K562 (cell line): ENCODE measurements at regions of chr1 and their contacts with region 1.

Region 1: DNA sequence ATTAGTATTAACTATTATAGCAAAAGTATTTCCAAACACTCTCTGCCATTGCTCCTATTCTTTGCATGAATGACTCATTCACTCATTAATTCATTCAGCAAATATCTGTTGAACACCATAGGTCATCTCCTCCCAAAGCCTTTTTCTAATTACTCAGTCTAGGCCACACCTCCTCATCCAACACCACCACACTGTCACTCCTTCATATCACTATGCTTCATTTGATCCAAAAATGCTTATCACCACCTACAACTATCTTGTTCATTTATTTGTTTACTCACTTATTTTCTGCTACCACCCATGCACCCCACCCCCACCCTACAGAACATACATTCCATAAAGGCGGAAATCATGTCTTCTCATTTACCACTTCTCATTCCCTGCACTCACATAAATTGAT is 94.4 kb upstream of the TNFSF4 start:
- DNase-seq: peak; percentile 25 to 59 (median 30)
- ATAC-seq: peak; percentile 61
- H3K4me3 ChIP-seq: no peak overlapping the region
- H3K27ac ChIP-seq: no peak overlapping the region
- H3K4me1 ChIP-seq: peaks cover 5 to 39% of the 10 kb centered on the region in 2 experiments
- H3K27me3 ChIP-seq: no peaks in the 10 kb centered on the region
- CTCF ChIP-seq: no peak
- EP300 ChIP-seq: no peak
- POLR2A ChIP-seq: no peak
- RAD21 ChIP-seq: no peak

Region 2: GRCh38 chr1:173330149-173330951 is 28.8 kb after region 1 on chr1:
- CTCF ChIA-PET with region 1: no interaction called
- POLR2A ChIA-PET with region 1: no interaction called
- in situ Hi-C with region 1: no loop called
- intact Hi-C with region 1: loop called (anchors 1 kb)
- DNase-seq: peak; percentile 21 to 84 (median 47)
- ATAC-seq: peak; percentile 91
- H3K4me3 ChIP-seq: no peak overlapping the region
- H3K27ac ChIP-seq: peak overlapping the region; percentile 75; the same call in 2 of the 3 replicates
- H3K4me1 ChIP-seq: peaks cover 0 to 32% of the 10 kb centered on the region in 2 experiments; a peak in 4 of 5 replicates
- H3K27me3 ChIP-seq: no peaks in the 10 kb centered on the region
- CTCF ChIP-seq: no peak
- EP300 ChIP-seq: peak; percentile 87
- POLR2A ChIP-seq: no peak
- RAD21 ChIP-seq: no peak; a peak in 1 of 4 replicates

Region 3: DNA sequence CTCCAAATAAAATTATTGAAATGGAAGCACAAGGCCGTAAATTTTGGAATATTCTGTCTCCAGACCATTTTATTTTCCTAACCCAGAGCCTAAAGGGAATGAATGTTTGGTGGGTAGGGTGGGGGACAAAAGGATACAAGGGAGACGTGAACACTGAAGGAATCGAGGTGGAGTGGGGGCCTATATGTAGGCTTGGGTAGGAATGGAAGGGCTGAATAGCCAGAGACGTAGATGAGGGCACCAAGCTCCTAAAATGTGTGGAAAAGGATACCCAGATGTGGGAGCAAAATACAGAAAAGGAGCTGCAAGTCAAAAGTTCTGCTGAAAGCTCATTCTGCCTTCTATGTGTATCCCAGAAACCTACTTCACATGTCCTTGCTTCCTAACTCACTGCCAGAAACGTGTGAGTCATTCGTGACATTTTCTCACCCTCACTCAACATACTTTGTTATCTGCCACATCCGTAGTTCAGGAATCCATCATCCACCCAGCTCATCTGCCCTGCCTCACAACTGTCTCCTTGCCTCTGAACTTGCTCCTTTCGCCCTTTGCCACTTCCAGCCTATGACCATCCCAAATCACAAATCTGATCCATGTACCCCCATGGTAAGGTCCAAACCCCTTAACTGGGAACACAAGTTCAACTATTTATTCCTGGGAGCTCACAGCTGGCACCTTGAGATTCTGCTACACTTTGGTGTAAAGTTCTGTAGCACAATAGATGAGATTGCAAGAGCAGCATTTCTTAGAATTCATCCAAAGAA is 91.6 kb after region 1 on chr1:
- CTCF ChIA-PET with region 1: no interaction called
- POLR2A ChIA-PET with region 1: no interaction called
- in situ Hi-C with region 1: no loop called
- intact Hi-C with region 1: no loop called
- DNase-seq: peak in 2 of 4 experiments; percentile 54 to 71
- ATAC-seq: peak; percentile 86
- H3K4me3 ChIP-seq: no peak overlapping the region
- H3K27ac ChIP-seq: peak overlapping the region; percentile 29; the same call in 2 of the 3 replicates
- H3K4me1 ChIP-seq: peaks cover 6 to 14% of the 10 kb centered on the region in 2 experiments
- H3K27me3 ChIP-seq: no peaks in the 10 kb centered on the region
- CTCF ChIP-seq: no peak
- EP300 ChIP-seq: peak; percentile 61; the same call in 1 of the 2 replicates
- POLR2A ChIP-seq: no peak
- RAD21 ChIP-seq: peak in 1 of 2 experiments; percentile 16; a peak in 1 of 4 replicates

Region 4: DNA sequence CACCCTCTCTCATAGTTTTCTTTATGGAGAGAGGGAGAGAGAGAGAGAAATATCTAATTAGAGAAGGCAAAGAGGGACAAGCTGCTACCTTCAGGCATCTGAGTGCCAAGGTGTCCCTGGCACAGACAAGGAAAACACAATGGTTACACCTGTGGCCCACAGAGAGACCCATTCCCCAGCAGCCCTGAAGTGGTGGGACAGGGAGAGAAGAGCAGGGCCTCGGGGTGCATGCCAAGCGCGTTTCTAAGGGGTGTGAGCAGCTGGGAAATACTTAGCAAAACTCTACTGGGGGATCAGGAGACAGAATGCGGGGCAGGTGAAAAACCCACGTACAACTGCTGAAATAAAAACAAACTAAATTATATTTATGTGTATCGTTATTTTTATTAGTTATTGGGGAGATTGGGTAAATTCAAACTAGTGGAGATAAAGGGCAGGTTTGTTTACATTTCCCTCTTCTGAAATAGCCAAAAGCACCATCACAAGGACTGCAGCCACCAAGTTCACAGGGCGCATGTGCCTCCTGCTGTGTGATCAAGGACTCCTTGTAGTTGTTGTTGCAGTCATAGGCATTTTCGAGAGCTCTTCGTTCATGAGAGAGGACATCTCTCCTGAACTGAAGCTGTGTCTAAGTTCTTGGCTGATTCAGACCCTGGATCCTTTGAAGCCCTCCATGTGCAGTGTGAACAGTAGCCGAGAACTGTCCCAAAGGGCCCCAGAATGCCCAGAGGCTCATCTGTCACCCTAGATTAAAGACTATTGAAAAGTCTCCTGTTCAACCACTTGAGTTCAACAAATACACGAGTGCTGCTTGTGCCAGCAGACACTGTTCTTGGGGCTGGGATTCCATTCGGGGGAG is 616.4 kb after region 1 on chr1:
- CTCF ChIA-PET with region 1: no interaction called
- POLR2A ChIA-PET with region 1: no interaction called
- in situ Hi-C with region 1: no loop called
- intact Hi-C with region 1: no loop called
- DNase-seq: no peak
- ATAC-seq: no peak
- H3K4me3 ChIP-seq: no peak overlapping the region
- H3K27ac ChIP-seq: no peak overlapping the region
- H3K4me1 ChIP-seq: peaks cover 4 to 16% of the 10 kb centered on the region in 2 experiments; a peak in 4 of 5 replicates
- H3K27me3 ChIP-seq: peaks cover 0 to 5% of the 10 kb centered on the region in 2 experiments; a peak in 1 of 5 replicates
- CTCF ChIP-seq: no peak
- EP300 ChIP-seq: no peak
- POLR2A ChIP-seq: no peak
- RAD21 ChIP-seq: no peak